ENCODE measurements at regions of chr9 and their contacts with region 1.

Region 1: GRCh38 chr9:78035383-78035993 is 3.9 kb upstream of the GNAQ start:
- DNase-seq: peak; percentile 72
- H3K4me3 ChIP-seq: no peak overlapping the region
- H3K27ac ChIP-seq: peak overlapping the region; percentile 38
- H3K4me1 ChIP-seq: no peaks in the 10 kb centered on the region
- H3K27me3 ChIP-seq: no peaks in the 10 kb centered on the region
- CTCF ChIP-seq: peak; percentile 66

Region 2: DNA sequence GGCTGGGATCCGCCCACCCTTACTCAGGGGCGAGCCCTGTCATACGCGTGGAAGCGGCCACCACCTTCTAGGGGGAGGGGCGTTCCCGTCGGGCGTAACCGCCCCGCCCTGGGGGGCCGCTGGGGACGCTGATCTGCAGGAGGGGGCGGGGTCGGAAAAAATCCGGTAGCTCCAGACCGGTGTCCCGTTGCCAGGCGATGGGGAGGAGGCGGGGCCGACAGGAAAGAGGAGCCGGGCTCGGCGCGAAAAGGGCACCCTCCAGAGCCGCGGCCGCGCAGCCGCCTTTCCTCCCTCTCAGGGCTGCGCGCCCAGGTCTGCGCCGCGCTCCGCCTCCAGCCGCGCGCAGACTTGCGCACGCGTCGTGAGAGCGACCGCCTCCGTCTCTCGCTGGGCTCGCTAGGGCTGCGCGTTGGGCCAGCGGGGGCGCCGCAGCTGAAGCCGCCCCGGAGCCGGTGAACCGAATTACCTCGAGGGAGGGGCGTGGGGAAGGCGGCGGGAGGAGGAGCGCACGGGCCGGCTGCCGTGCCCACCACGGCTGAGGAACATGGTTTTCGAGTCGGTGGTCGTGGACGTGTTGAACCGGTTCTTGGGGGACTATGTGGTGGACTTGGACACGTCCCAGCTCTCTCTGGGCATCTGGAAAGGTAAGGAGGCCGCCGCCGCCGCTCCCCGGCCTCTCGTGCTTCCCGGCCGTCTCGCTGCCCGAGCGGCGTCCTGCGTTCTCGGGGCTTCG is 858.2 kb before region 1 on chr9 and contains the start of gene VPS13A:
- intact Hi-C with region 1: loop called (anchors 10 kb)
- DNase-seq: peak; percentile 96
- H3K4me3 ChIP-seq: peak within 1 kb of the TSS; percentile 71
- H3K27ac ChIP-seq: peak within 1 kb of the TSS; percentile 70
- H3K4me1 ChIP-seq: no peaks in the 10 kb centered on the region
- H3K27me3 ChIP-seq: no peaks in the 10 kb centered on the region
- CTCF ChIP-seq: no peak
- total RNA-seq, gene VPS13A: 31.8 to 45.2 TPM

Region 3: DNA sequence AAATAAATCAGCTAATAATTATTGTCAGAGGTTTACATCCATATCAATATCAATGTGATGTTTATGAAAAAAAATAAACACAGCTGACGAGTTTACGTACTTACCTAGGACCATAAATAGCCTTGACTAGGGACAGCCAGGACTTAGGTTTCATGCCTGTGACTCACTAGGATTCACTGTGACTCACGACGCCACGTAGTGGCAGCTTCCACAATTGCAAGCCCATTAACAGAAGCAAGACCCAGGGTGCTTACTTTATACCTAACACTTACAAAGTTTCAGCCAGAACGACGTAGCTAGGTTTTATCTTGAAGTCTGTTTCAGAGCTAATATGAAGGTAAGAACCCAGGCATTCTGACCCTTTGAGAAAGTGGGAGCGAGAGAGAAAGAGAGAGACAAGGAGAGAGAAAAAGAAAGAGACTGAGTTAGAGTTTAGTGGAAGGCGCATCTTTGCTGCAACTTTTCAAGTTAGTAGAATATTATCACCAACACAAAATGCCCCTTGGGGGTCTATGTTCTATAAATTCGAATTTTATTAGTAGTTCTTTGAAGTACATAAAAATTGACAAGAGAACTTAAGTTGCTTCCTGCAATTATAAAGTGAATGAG is 578.6 kb before region 1 on chr9:
- intact Hi-C with region 1: loop called (anchors 10 kb)
- DNase-seq: peak; percentile 93
- H3K4me3 ChIP-seq: no peak overlapping the region
- H3K27ac ChIP-seq: no peak overlapping the region
- H3K4me1 ChIP-seq: no peaks in the 10 kb centered on the region
- H3K27me3 ChIP-seq: no peaks in the 10 kb centered on the region
- CTCF ChIP-seq: peak; percentile 98

Region 4: DNA sequence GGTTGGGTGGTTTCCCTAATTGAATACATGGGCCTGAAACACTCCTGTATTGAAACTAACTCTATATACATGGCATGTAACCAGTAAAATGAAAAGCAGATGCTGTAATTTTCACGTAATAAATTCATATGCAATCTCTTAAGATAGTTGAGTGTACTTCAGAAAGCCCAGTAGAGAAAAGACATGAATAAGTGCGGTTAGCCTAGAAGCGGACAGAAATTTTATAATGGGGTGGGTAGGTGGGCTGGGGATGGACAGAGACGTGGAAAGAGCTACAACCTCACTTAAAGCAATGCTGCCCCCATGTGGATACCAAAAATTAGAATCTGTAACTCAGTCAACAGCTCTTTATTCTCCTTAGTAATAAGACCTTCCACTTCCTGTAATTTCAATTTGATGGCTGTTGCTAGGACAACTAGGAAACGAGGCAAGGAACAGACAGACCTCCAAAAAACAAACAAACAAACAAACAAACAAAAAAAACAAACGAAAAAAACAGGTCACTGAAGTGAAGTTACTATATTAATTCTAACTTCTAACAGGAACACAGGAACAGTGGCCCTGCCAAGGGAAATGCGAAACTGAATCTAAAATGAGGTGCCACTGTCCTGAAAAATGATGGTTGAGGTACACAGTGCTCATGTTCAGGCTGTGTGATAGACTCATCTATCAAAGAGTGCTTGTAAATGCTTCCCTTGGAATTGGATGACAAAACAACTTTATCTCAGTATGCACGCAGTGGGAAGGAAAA is 284.0 kb before region 1 on chr9:
- intact Hi-C with region 1: loop called (anchors 10 kb)
- DNase-seq: peak; percentile 57
- H3K4me3 ChIP-seq: no peak overlapping the region
- H3K27ac ChIP-seq: no peak overlapping the region
- H3K4me1 ChIP-seq: no peaks in the 10 kb centered on the region
- H3K27me3 ChIP-seq: no peaks in the 10 kb centered on the region
- CTCF ChIP-seq: peak; percentile 41

Region 5: GRCh38 chr9:77841739-77842386 is 193.6 kb before region 1 on chr9:
- intact Hi-C with region 1: loop called (anchors 10 kb)
- DNase-seq: no peak
- H3K4me3 ChIP-seq: no peak overlapping the region
- H3K27ac ChIP-seq: no peak overlapping the region
- H3K4me1 ChIP-seq: peaks cover 8% of the 10 kb centered on the region
- H3K27me3 ChIP-seq: no peaks in the 10 kb centered on the region
- CTCF ChIP-seq: no peak

Region 6: DNA sequence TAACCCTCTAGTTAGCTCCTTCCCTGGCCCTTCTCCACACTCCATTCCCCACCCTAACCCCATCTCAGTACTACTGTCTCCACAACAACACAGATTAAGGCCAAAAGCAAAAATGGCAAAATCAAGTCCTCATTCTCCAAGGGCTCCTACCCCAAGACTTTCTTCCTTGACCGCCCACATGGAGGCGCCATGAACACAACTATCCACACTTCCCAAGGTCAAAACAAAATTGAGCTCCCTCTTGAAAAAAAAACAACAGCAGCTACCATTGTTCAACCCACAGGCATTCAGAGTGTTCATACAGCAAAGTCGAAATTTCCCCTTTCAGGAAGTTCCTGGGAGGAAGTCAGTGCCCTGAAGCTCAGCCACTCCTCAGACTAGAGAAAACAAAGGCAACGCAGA is 58.3 kb before region 1 on chr9:
- intact Hi-C with region 1: loop called (anchors 5 kb)
- DNase-seq: peak; percentile 77
- H3K4me3 ChIP-seq: no peak overlapping the region
- H3K27ac ChIP-seq: peak overlapping the region; percentile 76
- H3K4me1 ChIP-seq: peaks cover 11% of the 10 kb centered on the region
- H3K27me3 ChIP-seq: no peaks in the 10 kb centered on the region
- CTCF ChIP-seq: peak; percentile 51

Region 7: GRCh38 chr9:78121488-78121887 is 86.0 kb after region 1 on chr9:
- intact Hi-C with region 1: loop called (anchors 5 kb)
- DNase-seq: peak; percentile 85
- H3K4me3 ChIP-seq: no peak overlapping the region
- H3K27ac ChIP-seq: no peak overlapping the region
- H3K4me1 ChIP-seq: peaks cover 5% of the 10 kb centered on the region
- H3K27me3 ChIP-seq: no peaks in the 10 kb centered on the region
- CTCF ChIP-seq: peak; percentile 71

Region 8: GRCh38 chr9:78158286-78158685 is 122.8 kb after region 1 on chr9:
- intact Hi-C with region 1: no loop called
- DNase-seq: no peak
- H3K4me3 ChIP-seq: no peak overlapping the region
- H3K27ac ChIP-seq: no peak overlapping the region
- H3K4me1 ChIP-seq: no peaks in the 10 kb centered on the region
- H3K27me3 ChIP-seq: no peaks in the 10 kb centered on the region
- CTCF ChIP-seq: no peak